ENCODE measurements at regions of chr7 and their contacts with region 1.

Region 1: DNA sequence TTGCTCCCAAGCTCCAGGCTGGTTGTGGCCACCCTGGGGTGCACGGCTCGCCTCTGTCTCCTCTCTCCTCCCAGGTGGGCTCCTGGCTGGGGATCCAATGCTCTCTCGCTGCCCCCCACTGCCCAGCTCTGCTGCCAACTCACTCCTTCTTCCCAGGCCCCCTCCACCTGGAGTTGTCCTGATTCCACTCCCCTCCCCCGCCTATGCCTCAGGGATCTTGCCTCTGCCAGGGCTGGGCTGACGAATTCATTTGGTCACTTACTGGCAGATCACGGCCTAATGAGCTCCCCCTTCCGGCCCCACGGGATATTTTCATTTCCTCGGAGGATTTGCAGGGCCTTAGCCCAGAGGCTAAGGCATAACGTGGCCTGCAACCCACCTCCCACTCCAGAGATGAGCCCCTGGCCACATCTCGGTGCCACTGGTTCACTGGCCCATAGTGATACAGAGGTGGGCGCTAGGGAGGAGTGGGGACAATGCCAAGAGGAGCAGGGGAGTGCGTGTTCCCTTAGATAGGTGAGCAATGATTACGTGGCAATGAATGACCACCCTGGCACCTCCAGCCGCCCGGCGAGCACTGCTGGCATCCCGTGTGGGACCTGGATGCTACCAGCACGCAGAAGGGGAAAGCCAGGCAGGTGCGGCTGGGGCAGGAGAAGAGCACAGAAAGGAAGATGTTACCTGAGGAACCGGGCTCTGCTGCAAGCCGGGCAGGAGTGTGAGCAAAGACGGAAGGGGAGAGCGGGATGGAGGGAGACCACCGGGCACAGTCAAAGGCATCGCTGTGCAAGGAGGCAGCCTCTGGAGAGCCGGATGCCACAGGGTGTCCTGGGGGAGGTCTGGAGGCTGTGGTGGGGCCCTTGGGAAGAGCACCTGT is 344.7 kb upstream of the SHH start:
- DNase-seq: peak; percentile 65
- H3K4me3 Mint-ChIP-seq: no peak overlapping the region
- H3K27ac Mint-ChIP-seq: no peak overlapping the region
- H3K4me1 Mint-ChIP-seq: peaks cover 11% of the 10 kb centered on the region
- H3K27me3 Mint-ChIP-seq: no peaks in the 10 kb centered on the region
- CTCF ChIP-seq: peak; percentile 50

Region 2: DNA sequence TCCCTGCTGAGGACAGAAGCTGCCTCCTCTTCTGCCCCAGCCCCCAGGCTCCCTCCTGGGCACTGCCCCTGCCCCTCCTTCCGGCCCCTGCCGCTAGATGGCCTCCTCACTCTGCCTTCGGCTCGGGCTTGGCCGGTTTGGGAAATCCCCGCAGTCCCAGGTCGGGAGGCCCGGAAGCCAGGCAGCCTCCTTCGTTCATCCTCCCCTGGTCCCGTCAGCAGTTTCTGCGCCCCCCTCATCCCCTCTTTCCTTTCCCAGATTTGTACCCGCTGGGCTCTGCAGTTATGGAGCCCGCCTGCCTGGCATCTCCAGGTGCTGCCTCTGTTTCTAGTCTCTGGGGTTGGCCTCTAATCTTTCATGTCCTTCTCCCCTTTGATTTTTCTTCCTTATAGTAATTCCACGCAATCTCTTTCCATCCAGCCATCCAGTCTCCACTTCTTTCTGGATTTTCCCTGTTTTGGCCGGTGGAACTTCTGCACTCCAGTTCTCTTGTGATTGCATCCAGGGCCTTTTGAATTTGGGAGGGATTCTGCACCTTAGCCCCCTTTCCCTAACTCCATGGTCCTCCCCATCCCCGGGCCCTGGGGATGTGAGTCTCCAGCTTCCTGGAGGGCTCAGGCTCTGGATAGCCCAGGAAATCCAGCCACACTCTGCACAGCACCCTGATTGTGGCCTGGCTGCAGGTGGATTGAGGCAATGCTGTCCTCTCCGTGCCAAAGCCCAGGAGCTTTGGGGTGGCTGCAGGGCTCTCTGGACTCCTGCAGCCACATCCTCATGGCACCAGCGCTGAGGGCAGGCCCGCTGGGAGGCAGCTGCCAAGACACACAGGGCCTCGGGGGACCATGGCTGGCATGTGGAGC is 341.4 kb before region 1 on chr7:
- CTCF ChIA-PET with region 1: interaction called, 4 read pairs
- POLR2A ChIA-PET with region 1: interaction called, 3 read pairs
- intact Hi-C with region 1: loop called (anchors 1 kb)
- DNase-seq: peak; percentile 74
- H3K4me3 Mint-ChIP-seq: no peak overlapping the region
- H3K27ac Mint-ChIP-seq: no peak overlapping the region
- H3K4me1 Mint-ChIP-seq: peaks cover 11% of the 10 kb centered on the region
- H3K27me3 Mint-ChIP-seq: peaks cover 30% of the 10 kb centered on the region
- CTCF ChIP-seq: peak; percentile 91

Region 3: GRCh38 chr7:156167417-156167807 is 10.4 kb after region 1 on chr7:
- CTCF ChIA-PET with region 1: interaction called, 10 read pairs
- POLR2A ChIA-PET with region 1: no interaction called
- intact Hi-C with region 1: no loop called
- DNase-seq: no peak
- H3K4me3 Mint-ChIP-seq: no peak overlapping the region
- H3K27ac Mint-ChIP-seq: no peak overlapping the region
- H3K4me1 Mint-ChIP-seq: no peaks in the 10 kb centered on the region
- H3K27me3 Mint-ChIP-seq: peaks cover 59% of the 10 kb centered on the region
- CTCF ChIP-seq: no peak

Region 4: DNA sequence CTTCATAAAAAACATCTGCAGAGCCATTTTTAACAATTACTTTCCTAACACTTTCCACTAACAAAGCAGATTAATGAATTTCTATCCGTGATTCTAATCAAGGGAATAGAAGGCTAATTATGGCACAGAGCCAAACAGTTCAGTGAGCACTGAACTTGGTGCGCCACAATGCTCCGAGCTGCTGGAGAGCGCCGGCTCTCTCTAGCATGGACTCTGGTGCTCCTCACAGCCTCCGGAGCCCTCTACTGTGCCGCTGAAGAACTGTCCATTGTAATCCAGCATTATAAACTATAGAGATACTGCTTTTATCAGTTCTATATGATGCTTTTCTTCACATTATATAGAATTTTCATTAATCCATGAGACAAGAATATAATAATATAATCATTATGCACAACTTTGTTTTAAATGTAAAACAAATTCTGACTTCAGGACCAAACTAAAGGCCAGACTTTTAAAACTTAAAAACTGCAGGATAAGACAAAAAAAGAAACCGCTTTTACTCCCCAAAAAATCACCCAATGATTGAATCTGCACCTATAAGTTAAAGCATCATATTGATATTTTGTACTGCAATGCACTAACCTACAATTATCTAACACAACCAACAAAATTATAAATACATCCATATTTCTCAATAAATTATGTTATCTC is 607.2 kb after region 1 on chr7:
- CTCF ChIA-PET with region 1: no interaction called
- POLR2A ChIA-PET with region 1: no interaction called
- intact Hi-C with region 1: loop called (anchors 2 kb)
- DNase-seq: peak; percentile 70
- H3K4me3 Mint-ChIP-seq: no peak overlapping the region
- H3K27ac Mint-ChIP-seq: no peak overlapping the region
- H3K4me1 Mint-ChIP-seq: peaks cover 3% of the 10 kb centered on the region
- H3K27me3 Mint-ChIP-seq: no peaks in the 10 kb centered on the region
- CTCF ChIP-seq: peak; percentile 65

Measured in MCF 10A (cell line).